ENCODE measurements at regions of chrX and their contacts with region 1.

Region 1: DNA sequence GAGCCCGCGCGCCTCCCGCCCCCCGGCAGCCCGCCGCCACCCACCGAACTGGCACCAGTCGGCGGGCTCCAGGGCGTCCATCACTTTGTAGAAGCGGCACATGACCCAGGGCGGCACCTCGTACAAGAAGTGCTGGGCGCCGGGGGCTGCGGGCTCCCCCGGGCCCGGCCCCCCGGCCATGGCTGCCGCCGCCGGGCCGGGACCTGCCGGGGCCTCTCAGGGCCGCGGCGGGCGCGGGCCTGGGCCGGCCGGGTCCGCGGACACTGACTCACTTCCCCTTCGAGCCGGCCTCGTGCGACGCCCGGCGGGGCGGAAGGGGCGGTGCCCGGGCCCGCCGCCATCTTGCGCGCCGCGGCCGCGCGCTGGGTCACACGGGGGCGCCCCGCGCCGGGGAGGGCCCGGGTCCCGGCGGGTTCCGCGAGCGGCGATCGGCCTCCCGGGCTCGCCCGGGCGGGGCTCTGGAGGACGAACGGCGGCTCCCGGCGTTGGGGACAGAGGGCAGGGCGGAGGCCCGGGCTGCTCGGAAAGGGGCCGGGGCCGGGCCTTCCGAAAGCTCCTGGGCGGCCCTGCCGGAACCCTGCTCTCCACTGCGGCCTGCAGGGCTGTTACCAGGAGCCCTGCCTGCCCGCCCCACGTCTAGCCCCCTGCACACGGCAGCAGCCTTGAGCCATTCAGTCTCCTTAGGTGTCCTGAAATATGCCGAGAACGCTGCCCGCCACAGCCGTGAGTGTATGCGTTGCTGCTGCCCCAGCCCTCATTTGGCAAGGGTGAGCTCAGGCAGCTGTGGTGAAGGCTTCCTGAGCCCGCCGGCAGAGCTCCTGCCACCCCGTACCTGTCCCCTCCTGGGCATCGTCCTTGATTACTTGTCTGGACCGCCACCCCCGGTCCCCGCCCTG is at the start of gene IRAK1:
- DNase-seq: peak; percentile 45
- H3K4me3 Mint-ChIP-seq: peak within 1 kb of the TSS; percentile 88
- H3K27ac Mint-ChIP-seq: peak within 1 kb of the TSS; percentile 92
- H3K4me1 Mint-ChIP-seq: peaks cover 19% of the 10 kb centered on the region
- H3K27me3 Mint-ChIP-seq: no peaks in the 10 kb centered on the region
- total RNA-seq, gene IRAK1: 77.2 to 82.6 TPM

Region 2: DNA sequence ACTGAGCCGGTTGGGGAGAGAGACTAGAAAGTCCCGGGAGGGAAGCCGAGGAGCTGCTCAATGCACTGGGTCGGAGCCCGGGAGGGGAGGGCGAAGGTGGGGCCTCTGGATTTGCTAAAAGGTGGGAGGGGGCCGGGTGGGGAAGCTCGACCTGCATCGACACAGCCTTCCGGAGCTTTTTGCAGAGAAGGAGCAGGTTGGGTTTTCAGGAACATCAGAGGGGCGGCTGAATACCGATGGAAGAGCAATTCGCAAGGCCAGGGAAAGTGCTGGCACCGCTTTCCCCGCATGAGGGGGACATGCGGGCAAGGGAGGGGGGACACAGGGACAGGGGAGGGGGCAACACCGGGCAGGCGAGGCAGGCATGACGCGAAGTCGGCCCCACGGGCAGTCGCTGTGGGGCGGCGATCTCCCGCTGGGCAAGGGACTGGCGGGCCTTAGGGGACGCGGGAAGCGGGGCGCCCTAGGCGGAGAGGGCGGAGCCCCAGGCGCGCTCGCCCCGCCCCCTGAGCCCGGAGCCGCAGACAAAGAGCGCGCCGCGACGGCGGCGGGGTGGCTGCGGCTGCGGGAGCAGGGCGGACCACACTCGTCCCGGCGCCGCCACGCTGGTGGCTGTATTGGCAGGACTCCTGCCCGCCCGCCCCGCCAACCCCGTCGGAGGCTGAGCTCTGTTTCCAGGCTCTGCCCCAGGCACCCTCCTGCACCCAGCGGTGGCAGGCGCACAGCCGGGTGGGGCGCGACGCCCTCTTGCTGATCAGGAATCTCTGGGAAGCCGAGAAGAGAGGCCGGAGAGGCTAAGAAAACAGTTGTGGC is 201.1 kb before region 1 on chrX:
- CTCF ChIA-PET with region 1: no interaction called
- intact Hi-C with region 1: no loop called
- DNase-seq: peak; percentile 42
- H3K4me3 Mint-ChIP-seq: peak overlapping the region; percentile 60
- H3K27ac Mint-ChIP-seq: no peak overlapping the region
- H3K4me1 Mint-ChIP-seq: peaks cover 48% of the 10 kb centered on the region
- H3K27me3 Mint-ChIP-seq: no peaks in the 10 kb centered on the region

Region 3: GRCh38 chrX:153927922-153928760 is 91.7 kb before region 1 on chrX:
- CTCF ChIA-PET with region 1: no interaction called
- intact Hi-C with region 1: loop called (anchors 5 kb)
- DNase-seq: peak; percentile 93
- H3K4me3 Mint-ChIP-seq: peak overlapping the region; percentile 88
- H3K27ac Mint-ChIP-seq: peak overlapping the region; percentile 98
- H3K4me1 Mint-ChIP-seq: peaks cover 28% of the 10 kb centered on the region
- H3K27me3 Mint-ChIP-seq: no peaks in the 10 kb centered on the region

Region 4: DNA sequence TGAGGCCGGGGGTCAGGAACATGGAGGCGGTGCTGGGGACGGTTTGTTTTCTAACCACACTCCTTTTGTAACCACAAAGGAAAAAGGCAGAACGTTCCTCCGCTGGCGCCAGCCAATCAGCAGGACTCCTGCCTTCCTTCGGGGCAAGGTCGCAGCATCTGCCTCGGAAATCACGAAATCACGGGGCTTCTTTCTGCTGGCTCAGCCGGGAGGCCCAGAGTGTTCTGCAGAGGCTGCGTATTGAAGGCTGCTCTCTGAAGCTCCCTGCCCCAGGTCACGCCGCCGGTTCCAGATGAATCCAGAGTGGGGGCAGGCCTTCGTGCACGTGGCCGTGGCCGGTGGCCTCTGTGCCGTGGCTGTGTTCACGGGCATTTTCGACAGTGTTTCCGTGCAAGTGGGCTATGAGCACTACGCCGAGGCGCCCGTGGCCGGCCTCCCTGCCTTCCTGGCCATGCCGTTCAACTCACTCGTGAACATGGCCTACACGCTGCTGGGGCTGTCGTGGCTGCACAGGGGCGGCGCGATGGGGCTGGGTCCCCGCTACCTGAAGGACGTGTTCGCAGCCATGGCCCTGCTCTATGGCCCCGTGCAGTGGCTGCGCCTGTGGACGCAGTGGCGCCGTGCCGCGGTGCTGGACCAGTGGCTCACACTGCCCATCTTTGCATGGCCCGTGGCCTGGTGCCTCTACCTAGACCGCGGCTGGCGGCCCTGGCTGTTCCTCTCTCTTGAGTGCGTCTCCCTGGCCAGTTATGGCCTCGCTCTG is 37.9 kb before region 1 on chrX:
- CTCF ChIA-PET with region 1: no interaction called
- intact Hi-C with region 1: loop called (anchors 5 kb)
- DNase-seq: peak; percentile 83
- H3K4me3 Mint-ChIP-seq: peak overlapping the region; percentile 63
- H3K27ac Mint-ChIP-seq: peak overlapping the region; percentile 95
- H3K4me1 Mint-ChIP-seq: peaks cover 48% of the 10 kb centered on the region
- H3K27me3 Mint-ChIP-seq: no peaks in the 10 kb centered on the region

Region 5: GRCh38 chrX:154008521-154008920 is 11.4 kb before region 1 on chrX:
- CTCF ChIA-PET with region 1: no interaction called
- intact Hi-C with region 1: no loop called
- DNase-seq: no peak
- H3K4me3 Mint-ChIP-seq: no peak overlapping the region
- H3K27ac Mint-ChIP-seq: no peak overlapping the region
- H3K4me1 Mint-ChIP-seq: peaks cover 5% of the 10 kb centered on the region
- H3K27me3 Mint-ChIP-seq: no peaks in the 10 kb centered on the region

Region 6: GRCh38 chrX:154040307-154040756 is 20.5 kb after region 1 on chrX:
- CTCF ChIA-PET with region 1: no interaction called
- intact Hi-C with region 1: loop called (anchors 2 kb)
- DNase-seq: no peak
- H3K4me3 Mint-ChIP-seq: no peak overlapping the region
- H3K27ac Mint-ChIP-seq: peak overlapping the region; percentile 66
- H3K4me1 Mint-ChIP-seq: peaks cover 37% of the 10 kb centered on the region
- H3K27me3 Mint-ChIP-seq: no peaks in the 10 kb centered on the region

Region 7: DNA sequence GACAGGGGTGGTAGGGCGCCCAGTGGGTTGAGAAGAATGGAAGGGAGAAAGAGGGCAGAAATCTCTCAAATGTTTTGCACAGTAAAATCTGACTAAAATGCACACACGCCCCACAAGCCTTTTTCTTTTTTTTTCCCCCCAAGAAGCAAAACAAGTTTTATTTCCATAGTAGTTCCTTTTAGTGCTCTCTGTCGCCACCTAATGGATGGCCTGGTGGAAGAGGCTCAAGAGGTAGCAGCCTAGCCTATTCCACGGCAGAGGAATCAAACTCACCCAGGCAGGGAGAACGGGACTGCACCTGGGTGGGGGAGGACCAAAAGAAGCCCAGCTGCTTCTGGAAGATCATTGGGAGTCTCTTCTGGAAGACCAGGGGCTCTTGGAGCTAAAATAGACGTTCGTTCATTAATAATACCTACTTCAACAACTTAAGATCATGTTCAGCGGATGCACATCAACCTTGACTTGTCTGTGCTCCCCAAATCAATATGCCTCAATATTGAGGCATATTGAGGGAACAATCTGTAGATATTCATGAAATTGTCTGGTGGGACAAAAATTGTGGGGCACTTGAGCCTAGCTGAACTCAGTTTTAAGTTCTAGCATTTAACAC is 31.4 kb after region 1 on chrX:
- CTCF ChIA-PET with region 1: interaction called, 7 read pairs
- intact Hi-C with region 1: loop called (anchors 1 kb)
- DNase-seq: peak; percentile 81
- H3K4me3 Mint-ChIP-seq: no peak overlapping the region
- H3K27ac Mint-ChIP-seq: peak overlapping the region; percentile 39
- H3K4me1 Mint-ChIP-seq: peaks cover 32% of the 10 kb centered on the region
- H3K27me3 Mint-ChIP-seq: no peaks in the 10 kb centered on the region

Region 8: GRCh38 chrX:154082396-154083125 is 62.7 kb after region 1 on chrX:
- CTCF ChIA-PET with region 1: no interaction called
- intact Hi-C with region 1: loop called (anchors 5 kb)
- DNase-seq: no peak
- H3K4me3 Mint-ChIP-seq: no peak overlapping the region
- H3K27ac Mint-ChIP-seq: peak overlapping the region; percentile 5
- H3K4me1 Mint-ChIP-seq: peaks cover 40% of the 10 kb centered on the region
- H3K27me3 Mint-ChIP-seq: no peaks in the 10 kb centered on the region

Region 9: DNA sequence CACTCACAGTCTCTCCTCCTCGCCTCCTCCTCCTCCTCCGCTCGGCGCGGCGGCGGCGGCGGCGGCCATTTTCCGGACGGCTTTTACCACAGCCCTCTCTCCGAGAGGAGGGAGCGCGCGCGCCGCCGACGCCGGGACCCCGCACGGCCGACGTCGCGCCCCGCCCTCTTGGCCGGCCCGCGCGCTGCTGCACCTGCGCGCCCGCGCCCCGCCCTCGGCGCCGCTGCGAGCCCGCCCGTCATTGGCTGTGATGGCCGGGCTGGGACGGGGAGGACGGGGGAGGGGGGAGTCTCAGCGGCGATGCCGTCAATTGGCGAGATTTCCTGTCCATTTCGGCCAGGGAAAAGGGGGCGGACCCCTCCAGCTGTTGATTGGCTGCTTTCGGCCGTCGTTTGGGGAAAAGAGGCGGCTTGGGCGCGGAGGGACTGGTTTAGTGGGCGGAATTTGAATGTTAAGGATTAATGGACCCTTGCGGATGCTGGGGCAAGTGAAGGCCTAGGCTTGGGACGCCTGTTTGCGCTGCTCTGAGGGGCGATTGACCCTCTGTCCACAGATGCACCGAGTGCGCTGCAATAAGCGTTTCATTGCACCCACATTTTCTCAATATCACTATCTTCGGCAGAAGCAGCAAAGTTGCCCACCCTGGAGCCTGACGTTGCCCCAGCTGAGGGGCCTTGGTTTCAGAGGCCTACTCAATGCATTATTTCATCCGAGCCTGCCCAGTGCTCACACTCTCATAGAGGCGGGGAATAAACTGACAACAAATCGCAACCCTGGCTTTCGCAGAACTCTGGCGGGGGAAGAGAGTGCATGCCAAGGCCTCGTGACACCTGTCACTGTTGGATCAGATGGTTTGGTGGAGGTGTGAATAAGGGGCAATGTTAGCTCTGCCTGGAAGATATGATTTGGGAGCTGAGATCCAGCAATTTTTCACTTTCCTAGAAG is 78.0 kb after region 1 on chrX and contains the start of gene MECP2:
- CTCF ChIA-PET with region 1: interaction called, 3 read pairs
- intact Hi-C with region 1: loop called (anchors 2 kb)
- DNase-seq: peak; percentile 94
- H3K4me3 Mint-ChIP-seq: peak within 1 kb of the TSS; percentile 89
- H3K27ac Mint-ChIP-seq: peak within 1 kb of the TSS; percentile 94
- H3K4me1 Mint-ChIP-seq: peaks cover 44% of the 10 kb centered on the region
- H3K27me3 Mint-ChIP-seq: no peaks in the 10 kb centered on the region
- total RNA-seq, gene MECP2: 47.1 to 50.2 TPM

Region 10: DNA sequence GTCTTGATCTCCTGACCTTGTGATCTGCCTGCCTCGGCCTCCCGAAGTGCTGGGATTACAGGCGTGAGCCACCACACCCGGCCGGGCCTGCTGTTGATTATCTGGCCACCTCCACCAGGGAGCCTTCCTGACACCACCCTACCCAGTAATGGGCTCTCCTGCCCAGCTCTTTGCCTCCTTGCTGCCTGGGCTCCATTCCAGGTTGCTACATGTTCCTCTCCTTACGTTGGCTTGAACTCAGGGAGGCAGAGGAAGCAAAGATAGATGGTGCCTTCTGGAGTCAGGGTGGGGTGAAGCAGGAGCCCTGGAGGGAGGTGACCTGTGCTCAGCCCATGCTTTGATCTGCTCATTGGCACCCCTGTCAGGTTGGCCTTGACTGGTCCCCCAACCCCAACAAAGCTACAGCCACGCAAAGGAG is 328.2 kb after region 1 on chrX:
- CTCF ChIA-PET with region 1: no interaction called
- intact Hi-C with region 1: no loop called
- DNase-seq: no peak
- H3K4me3 Mint-ChIP-seq: no peak overlapping the region
- H3K27ac Mint-ChIP-seq: peak overlapping the region; percentile 18
- H3K4me1 Mint-ChIP-seq: peaks cover 17% of the 10 kb centered on the region
- H3K27me3 Mint-ChIP-seq: no peaks in the 10 kb centered on the region

Region 11: DNA sequence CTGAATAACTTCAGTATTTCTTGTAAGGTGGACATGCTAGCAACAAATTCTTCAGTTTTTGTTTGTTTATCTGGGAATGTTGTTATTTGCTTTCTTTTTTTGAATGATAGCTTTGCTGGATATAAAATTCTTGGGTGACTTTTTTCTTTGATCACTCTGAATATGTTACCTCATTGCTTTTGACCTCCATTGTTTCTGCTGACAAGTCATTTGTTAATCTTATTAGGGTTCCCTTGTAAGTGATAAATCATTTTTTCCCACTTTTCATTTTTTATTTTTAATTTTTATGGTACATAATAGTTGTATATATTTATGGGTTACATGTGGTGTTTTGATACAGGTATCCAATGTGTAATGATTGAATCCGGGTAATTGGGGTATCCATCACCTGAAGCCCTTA is 1251.1 kb after region 1 on chrX:
- CTCF ChIA-PET with region 1: no interaction called
- intact Hi-C with region 1: no loop called
- DNase-seq: no peak
- H3K4me3 Mint-ChIP-seq: no peak overlapping the region
- H3K27ac Mint-ChIP-seq: no peak overlapping the region
- H3K4me1 Mint-ChIP-seq: peaks cover 4% of the 10 kb centered on the region
- H3K27me3 Mint-ChIP-seq: no peaks in the 10 kb centered on the region

Measured in activated naive CD4-positive, alpha-beta T cell treated with anti-CD3 and anti-CD28 coated beads for 36 hours (primary cell).